ENCODE measurements at regions of chr21 and their contacts with region 1.

Region 1: DNA sequence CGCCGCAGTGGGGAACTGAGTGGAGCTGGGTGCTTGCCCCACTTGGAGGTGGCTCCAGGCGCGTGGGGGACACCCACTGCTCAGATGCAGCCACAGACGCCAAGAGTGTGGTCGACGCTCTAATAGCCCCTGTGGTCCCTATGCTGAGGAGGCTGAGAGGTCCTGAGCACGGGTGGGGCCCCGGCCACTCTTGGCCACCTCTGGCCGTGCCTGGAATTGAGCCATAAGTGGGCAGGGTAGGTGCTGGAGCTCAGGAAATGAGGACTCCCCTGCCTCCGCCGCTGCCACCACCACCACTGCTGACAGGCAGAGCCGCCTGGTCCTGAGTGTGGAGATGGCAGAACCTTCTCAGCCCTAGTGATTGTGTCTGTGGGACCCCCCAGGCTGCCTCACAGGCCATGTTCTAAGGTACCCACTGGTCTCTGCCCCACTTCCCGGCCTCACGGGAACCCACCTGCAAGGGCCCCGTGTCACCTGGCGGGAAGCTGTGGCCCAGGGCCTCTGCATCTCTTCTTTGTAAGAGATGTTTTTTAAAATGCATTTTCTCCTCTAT is 34.6 kb upstream of the DIP2A start:
- DNase-seq: peak; percentile 72
- ATAC-seq: peak; percentile 51
- H3K4me3 Mint-ChIP-seq: peak overlapping the region; percentile 83
- H3K27ac Mint-ChIP-seq: peak overlapping the region; percentile 97
- H3K4me1 Mint-ChIP-seq: peaks cover 21% of the 10 kb centered on the region
- H3K27me3 Mint-ChIP-seq: no peaks in the 10 kb centered on the region

Region 2: GRCh38 chr21:46323227-46324128 is 100.6 kb before region 1 on chr21 and contains the start of gene C21orf58:
- POLR2A ChIA-PET with region 1: interaction called, 32 read pairs
- DNase-seq: peak; percentile 100
- ATAC-seq: peak; percentile 87
- H3K4me3 Mint-ChIP-seq: peak within 1 kb of the TSS; percentile 98
- H3K27ac Mint-ChIP-seq: peak within 1 kb of the TSS; percentile 99
- H3K4me1 Mint-ChIP-seq: peaks cover 32% of the 10 kb centered on the region
- H3K27me3 Mint-ChIP-seq: no peaks in the 10 kb centered on the region
- total RNA-seq, gene C21orf58: 50.1 to 53.9 TPM

Region 3: GRCh38 chr21:46437096-46437498 is 13.0 kb after region 1 on chr21:
- POLR2A ChIA-PET with region 1: interaction called, 11 read pairs
- DNase-seq: no peak
- ATAC-seq: peak; percentile 16
- H3K4me3 Mint-ChIP-seq: peak overlapping the region; percentile 51
- H3K27ac Mint-ChIP-seq: peak overlapping the region; percentile 83
- H3K4me1 Mint-ChIP-seq: peaks cover 10% of the 10 kb centered on the region
- H3K27me3 Mint-ChIP-seq: no peaks in the 10 kb centered on the region

Region 4: GRCh38 chr21:46458315-46459023 is 34.4 kb after region 1 on chr21 and contains the start of gene DIP2A:
- POLR2A ChIA-PET with region 1: interaction called, 31 read pairs
- DNase-seq: peak; percentile 98
- ATAC-seq: peak; percentile 97
- H3K4me3 Mint-ChIP-seq: peak within 1 kb of the TSS; percentile 92
- H3K27ac Mint-ChIP-seq: peak within 1 kb of the TSS; percentile 91
- H3K4me1 Mint-ChIP-seq: peaks cover 44% of the 10 kb centered on the region
- H3K27me3 Mint-ChIP-seq: no peaks in the 10 kb centered on the region
- total RNA-seq, gene DIP2A: 78.7 to 78.8 TPM

Region 5: DNA sequence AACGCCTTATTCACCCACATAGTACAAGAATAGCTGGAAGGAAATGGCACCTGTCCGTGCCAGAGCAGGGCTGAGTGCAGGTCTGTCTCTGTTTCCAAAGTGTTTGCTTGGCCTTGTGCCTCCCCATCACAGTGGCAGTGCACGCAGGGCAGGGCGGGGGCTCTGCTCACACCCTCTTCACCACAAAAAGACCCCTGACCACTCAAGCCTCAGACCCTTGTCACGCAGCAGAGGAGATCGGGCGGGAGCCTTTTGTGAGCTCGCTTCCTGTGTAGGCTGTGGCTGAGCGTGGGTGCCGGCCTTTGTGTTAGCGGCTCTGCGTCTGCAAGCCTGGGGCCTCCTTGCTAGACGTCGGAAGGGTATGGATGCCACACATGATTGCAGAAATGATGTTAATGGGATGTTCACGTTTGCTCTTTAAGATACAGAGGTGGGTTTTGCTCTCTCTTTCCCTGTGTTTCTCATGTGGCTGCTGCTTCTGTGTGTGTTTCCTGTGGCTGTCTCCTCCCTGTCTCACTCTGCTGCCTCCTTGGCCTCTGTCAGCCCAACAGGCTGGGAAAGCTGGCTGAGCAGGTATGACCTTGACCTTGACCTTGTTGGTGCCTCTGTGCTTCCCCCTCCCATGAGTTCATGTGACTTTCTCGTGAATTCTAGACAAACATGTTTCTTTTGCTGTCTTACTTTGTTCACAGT is 135.3 kb after region 1 on chr21:
- POLR2A ChIA-PET with region 1: interaction called, 12 read pairs
- DNase-seq: peak; percentile 76
- ATAC-seq: peak; percentile 71
- H3K4me3 Mint-ChIP-seq: peak overlapping the region; percentile 82
- H3K27ac Mint-ChIP-seq: peak overlapping the region; percentile 98
- H3K4me1 Mint-ChIP-seq: peaks cover 45% of the 10 kb centered on the region
- H3K27me3 Mint-ChIP-seq: no peaks in the 10 kb centered on the region